GM12878 (cell line): ENCODE measurements at regions of chr18 and their contacts with region 1.

Region 1: GRCh38 chr18:36284671-36285295 is 12.7 kb upstream of the FHOD3 start:
- DNase-seq: peak; percentile 40
- ATAC-seq: peak; percentile 83
- H3K4me3 ChIP-seq: no peak overlapping the region
- H3K27ac ChIP-seq: no peak overlapping the region
- H3K4me1 ChIP-seq: no peaks in the 10 kb centered on the region
- H3K27me3 ChIP-seq: peaks cover 0 to 2% of the 10 kb centered on the region in 2 experiments; a peak in 2 of 4 replicates
- CTCF ChIP-seq: peak; percentile 76 to 92 (median 83)
- EP300 ChIP-seq: no peak
- POLR2A ChIP-seq: no peak
- RAD21 ChIP-seq: peak; percentile 99

Region 2: GRCh38 chr18:36015629-36016028 is 269.2 kb before region 1 on chr18:
- CTCF ChIA-PET with region 1: interaction called, 113 read pairs
- POLR2A ChIA-PET with region 1: interaction called, 6 read pairs
- RAD21 ChIA-PET with region 1: interaction called, 41 read pairs
- SMC1A ChIA-PET with region 1: interaction called, 91 read pairs
- in situ Hi-C with region 1: loop called (anchors 5 kb)
- intact Hi-C with region 1: loop called (anchors 1 kb)
- DNase-seq: peak; percentile 66
- ATAC-seq: peak; percentile 90
- H3K4me3 ChIP-seq: no peak overlapping the region
- H3K27ac ChIP-seq: no peak overlapping the region
- H3K4me1 ChIP-seq: peaks cover 14% of the 10 kb centered on the region
- H3K27me3 ChIP-seq: no peaks in the 10 kb centered on the region
- CTCF ChIP-seq: no peak
- EP300 ChIP-seq: peak in 1 of 2 experiments; percentile 93; a peak in 2 of 4 replicates
- POLR2A ChIP-seq: no peak
- RAD21 ChIP-seq: no peak

Region 3: GRCh38 chr18:36120300-36120778 is 164.4 kb before region 1 on chr18:
- CTCF ChIA-PET with region 1: interaction called, 12 read pairs
- POLR2A ChIA-PET with region 1: no interaction called
- RAD21 ChIA-PET with region 1: interaction called, 4 read pairs
- SMC1A ChIA-PET with region 1: interaction called, 8 read pairs
- in situ Hi-C with region 1: no loop called
- intact Hi-C with region 1: no loop called
- DNase-seq: no peak
- ATAC-seq: no peak
- H3K4me3 ChIP-seq: no peak overlapping the region
- H3K27ac ChIP-seq: no peak overlapping the region
- H3K4me1 ChIP-seq: no peaks in the 10 kb centered on the region
- H3K27me3 ChIP-seq: no peaks in the 10 kb centered on the region
- CTCF ChIP-seq: no peak
- EP300 ChIP-seq: no peak
- POLR2A ChIP-seq: no peak
- RAD21 ChIP-seq: no peak

Region 4: GRCh38 chr18:36274083-36274715 is 10.6 kb before region 1 on chr18:
- CTCF ChIA-PET with region 1: interaction called, 10 read pairs
- POLR2A ChIA-PET with region 1: no interaction called
- RAD21 ChIA-PET with region 1: interaction called, 6 read pairs
- SMC1A ChIA-PET with region 1: interaction called, 3 read pairs
- in situ Hi-C with region 1: no loop called
- intact Hi-C with region 1: no loop called
- DNase-seq: no peak
- ATAC-seq: no peak
- H3K4me3 ChIP-seq: no peak overlapping the region
- H3K27ac ChIP-seq: no peak overlapping the region
- H3K4me1 ChIP-seq: no peaks in the 10 kb centered on the region
- H3K27me3 ChIP-seq: no peaks in the 10 kb centered on the region
- CTCF ChIP-seq: no peak
- EP300 ChIP-seq: no peak
- POLR2A ChIP-seq: no peak
- RAD21 ChIP-seq: no peak

Region 5: GRCh38 chr18:36757081-36757480 is 472.3 kb after region 1 on chr18:
- CTCF ChIA-PET with region 1: no interaction called
- POLR2A ChIA-PET with region 1: no interaction called
- RAD21 ChIA-PET with region 1: no interaction called
- SMC1A ChIA-PET with region 1: no interaction called
- in situ Hi-C with region 1: no loop called
- intact Hi-C with region 1: loop called (anchors 2 kb)
- DNase-seq: no peak
- ATAC-seq: peak; percentile 48
- H3K4me3 ChIP-seq: no peak overlapping the region
- H3K27ac ChIP-seq: no peak overlapping the region
- H3K4me1 ChIP-seq: no peaks in the 10 kb centered on the region
- H3K27me3 ChIP-seq: no peaks in the 10 kb centered on the region
- CTCF ChIP-seq: peak; percentile 31 to 54 (median 38); a peak in 5 of 6 replicates
- EP300 ChIP-seq: no peak
- POLR2A ChIP-seq: no peak
- RAD21 ChIP-seq: peak; percentile 58

Region 6: GRCh38 chr18:36872329-36872728 is 587.5 kb after region 1 on chr18:
- CTCF ChIA-PET with region 1: no interaction called
- POLR2A ChIA-PET with region 1: no interaction called
- RAD21 ChIA-PET with region 1: no interaction called
- SMC1A ChIA-PET with region 1: no interaction called
- in situ Hi-C with region 1: no loop called
- intact Hi-C with region 1: no loop called
- DNase-seq: no peak
- ATAC-seq: no peak
- H3K4me3 ChIP-seq: no peak overlapping the region
- H3K27ac ChIP-seq: no peak overlapping the region
- H3K4me1 ChIP-seq: no peaks in the 10 kb centered on the region
- H3K27me3 ChIP-seq: no peaks in the 10 kb centered on the region
- CTCF ChIP-seq: no peak
- EP300 ChIP-seq: no peak
- POLR2A ChIP-seq: no peak
- RAD21 ChIP-seq: no peak